Activated T-helper 1 cell treated with anti-CD3 and anti-CD28 coated beads, Interleukin-12 subunit alpha, Interleukin-12 subunit beta, Interleukin-2, Interleukin-4 antibody, amounts not matched to agents 30 ng/mL and 10 ng/mL and 1 ng/mL, durations not matched to agents 14 hours and 24 hours and 36 hours (primary cell): ENCODE measurements at regions of chr4 and their contacts with region 1.

Region 1: DNA sequence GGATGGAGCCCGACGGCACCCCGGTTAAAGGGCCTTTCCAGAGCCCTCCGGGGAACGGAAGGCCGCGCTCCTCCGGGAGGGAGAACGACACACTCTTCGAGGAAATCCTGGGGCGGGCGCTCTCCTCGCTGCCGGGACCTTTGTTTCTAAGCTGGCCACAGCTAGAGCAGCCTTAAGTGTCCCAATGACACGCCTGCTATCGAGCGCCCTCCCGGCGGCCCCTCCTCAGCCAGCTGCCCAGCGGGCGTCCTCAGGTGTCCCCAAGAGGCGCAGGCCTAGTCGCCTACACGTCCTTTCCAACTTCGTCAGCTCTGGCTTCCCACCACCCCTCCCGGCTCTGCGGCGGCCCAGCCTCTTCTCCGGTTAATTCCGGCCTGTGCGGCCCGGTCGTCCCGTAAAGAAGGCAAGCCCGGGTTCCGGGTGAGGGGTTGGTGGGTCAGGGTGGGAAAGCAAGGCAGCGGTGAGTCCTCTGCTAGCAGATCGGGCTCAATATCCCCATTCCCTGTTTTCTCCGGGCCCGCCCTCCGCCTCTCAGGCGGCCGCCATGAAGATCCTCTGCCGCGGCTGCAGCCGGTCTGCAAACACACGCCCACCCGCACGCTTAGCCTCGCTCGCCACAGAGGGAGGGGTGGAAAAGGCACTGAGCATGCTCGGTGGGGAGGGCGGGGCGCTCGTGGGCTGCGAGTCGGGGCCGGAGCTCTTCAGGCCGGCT is 449 bp upstream of the RAP1GDS1 start:
- DNase-seq: peak; percentile 89
- H3K4me3 Mint-ChIP-seq: peak overlapping the region; percentile 96
- H3K27ac Mint-ChIP-seq: peak overlapping the region; percentile 97
- H3K4me1 Mint-ChIP-seq: peaks cover 55% of the 10 kb centered on the region
- H3K27me3 Mint-ChIP-seq: no peaks in the 10 kb centered on the region

Region 2: DNA sequence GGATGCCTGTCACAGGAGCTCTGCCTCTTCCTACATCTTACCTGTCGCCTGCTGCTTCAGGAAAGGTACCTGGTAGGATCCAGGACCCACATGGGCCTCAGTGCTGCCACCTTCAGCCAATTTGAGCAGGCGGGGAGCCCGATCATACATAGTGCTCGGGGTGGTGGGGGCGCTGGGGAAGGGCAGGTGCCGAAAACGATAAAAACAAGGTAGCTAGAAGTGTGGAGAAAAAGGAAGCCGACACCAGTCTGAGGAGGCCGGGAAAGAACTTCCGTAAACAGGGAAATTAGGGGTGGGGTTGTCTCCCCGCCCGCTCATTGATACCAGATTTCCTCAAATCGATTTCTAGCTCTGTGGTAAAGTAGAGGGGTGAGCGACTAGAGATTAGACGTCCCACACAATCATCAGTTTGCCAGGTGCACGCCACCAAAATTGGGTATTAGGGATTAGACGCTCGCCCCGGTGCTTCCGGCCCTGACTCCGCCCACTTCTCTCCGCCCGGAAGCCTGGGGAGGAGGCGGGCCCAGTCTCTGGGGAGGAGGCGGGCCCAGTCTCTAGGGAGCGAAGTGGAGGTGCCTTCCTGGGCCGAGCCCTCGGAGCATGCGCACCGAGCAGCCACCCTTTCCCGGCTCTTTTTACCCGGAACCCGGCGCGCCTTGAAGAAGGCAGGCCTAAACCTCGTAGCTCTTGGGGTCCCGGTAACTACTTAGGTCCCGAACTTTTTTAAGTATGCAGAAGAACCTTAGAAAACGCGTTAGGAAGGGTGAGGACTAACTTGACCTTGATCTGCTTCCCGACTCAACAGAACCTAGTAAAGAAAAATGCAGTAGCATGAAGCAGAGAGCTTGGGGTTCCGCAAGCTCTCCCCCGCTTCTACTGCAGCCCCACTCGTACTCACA is 117.5 kb before region 1 on chr4 and contains the start of gene STPG2:
- intact Hi-C with region 1: loop called (anchors 1 kb)
- DNase-seq: peak; percentile 91
- H3K4me3 Mint-ChIP-seq: peak within 1 kb of the TSS; percentile 88
- H3K27ac Mint-ChIP-seq: peak within 1 kb of the TSS; percentile 93
- H3K4me1 Mint-ChIP-seq: peaks cover 18% of the 10 kb centered on the region
- H3K27me3 Mint-ChIP-seq: peaks cover 7% of the 10 kb centered on the region
- total RNA-seq, gene STPG2: not detected in 2 replicates

Region 3: GRCh38 chr4:98377559-98377958 is 116.8 kb after region 1 on chr4:
- intact Hi-C with region 1: loop called (anchors 5 kb)
- DNase-seq: no peak
- H3K4me3 Mint-ChIP-seq: no peak overlapping the region
- H3K27ac Mint-ChIP-seq: no peak overlapping the region
- H3K4me1 Mint-ChIP-seq: peaks cover 10% of the 10 kb centered on the region
- H3K27me3 Mint-ChIP-seq: no peaks in the 10 kb centered on the region

Region 4: DNA sequence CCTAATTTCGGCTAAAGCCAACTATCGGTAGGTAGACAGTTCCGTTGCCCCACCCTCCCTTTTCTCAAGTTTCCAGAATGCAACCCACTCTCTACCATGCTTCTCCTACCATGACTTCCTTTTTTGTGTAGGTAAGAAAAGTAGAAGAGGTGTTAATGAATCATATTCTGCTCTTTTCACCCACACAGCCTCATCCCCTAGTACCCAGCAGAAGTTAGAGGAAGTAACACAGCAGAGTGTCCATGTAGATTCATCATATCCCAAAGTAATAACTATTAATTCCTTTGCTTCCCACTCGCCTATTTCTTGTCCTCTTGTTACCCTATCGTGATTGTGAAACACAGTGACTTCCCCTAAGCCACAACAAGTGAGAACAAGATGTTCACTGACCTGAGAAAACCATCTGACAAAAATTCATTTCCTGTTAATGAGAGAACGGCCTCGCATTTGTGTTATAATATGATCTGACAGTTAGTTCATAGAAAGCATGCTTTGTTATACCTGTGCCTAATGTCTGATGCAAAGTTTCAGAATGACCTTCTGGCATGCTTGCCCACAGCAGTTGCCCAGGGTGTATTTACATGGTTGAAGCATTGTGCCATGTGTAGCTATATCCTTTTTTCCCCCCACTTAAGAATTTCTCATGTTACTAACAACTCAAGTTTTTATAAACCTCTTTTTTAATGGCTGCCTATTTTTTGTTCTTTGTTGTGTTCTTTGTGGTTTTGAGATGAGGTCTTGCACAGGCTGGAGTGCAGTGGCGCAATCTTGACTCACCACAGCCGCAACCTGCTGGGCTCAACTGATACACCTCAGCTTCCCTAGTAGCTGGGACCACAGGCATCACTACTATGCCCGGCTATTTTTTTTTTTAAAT is 186.0 kb after region 1 on chr4:
- intact Hi-C with region 1: loop called (anchors 1 kb)
- DNase-seq: peak; percentile 44
- H3K4me3 Mint-ChIP-seq: peak overlapping the region; percentile 67
- H3K27ac Mint-ChIP-seq: peak overlapping the region; percentile 90
- H3K4me1 Mint-ChIP-seq: peaks cover 43% of the 10 kb centered on the region
- H3K27me3 Mint-ChIP-seq: peaks cover 3% of the 10 kb centered on the region

Region 5: GRCh38 chr4:98510757-98511517 is 250.2 kb after region 1 on chr4:
- intact Hi-C with region 1: loop called (anchors 5 kb)
- DNase-seq: peak; percentile 34
- H3K4me3 Mint-ChIP-seq: peak overlapping the region; percentile 47
- H3K27ac Mint-ChIP-seq: peak overlapping the region; percentile 83
- H3K4me1 Mint-ChIP-seq: peaks cover 85% of the 10 kb centered on the region
- H3K27me3 Mint-ChIP-seq: no peaks in the 10 kb centered on the region

Region 6: GRCh38 chr4:99088481-99089365 is 828.0 kb after region 1 on chr4 and contains the start of gene ADH5:
- intact Hi-C with region 1: loop called (anchors 1 kb)
- DNase-seq: peak; percentile 77
- H3K4me3 Mint-ChIP-seq: peak within 1 kb of the TSS; percentile 98
- H3K27ac Mint-ChIP-seq: peak within 1 kb of the TSS; percentile 98
- H3K4me1 Mint-ChIP-seq: peaks cover 50% of the 10 kb centered on the region
- H3K27me3 Mint-ChIP-seq: peaks cover 2% of the 10 kb centered on the region
- total RNA-seq, gene ADH5: 68.8 and 74.9 TPM in 2 replicates

Region 7: GRCh38 chr4:99816545-99817308 is 1556.0 kb after region 1 on chr4 and contains the start of gene DAPP1:
- intact Hi-C with region 1: loop called (anchors 5 kb)
- DNase-seq: peak; percentile 79
- H3K4me3 Mint-ChIP-seq: peak within 1 kb of the TSS; percentile 92
- H3K27ac Mint-ChIP-seq: peak within 1 kb of the TSS; percentile 77
- H3K4me1 Mint-ChIP-seq: peaks cover 76% of the 10 kb centered on the region
- H3K27me3 Mint-ChIP-seq: no peaks in the 10 kb centered on the region
- total RNA-seq, gene DAPP1: 38.8 and 40.2 TPM in 2 replicates